ENCODE measurements at regions of chr7 and their contacts with region 1.

Region 1: GRCh38 chr7:50212666-50213621 is 91.6 kb upstream of the IKZF1 start:
- DNase-seq: peak; percentile 56 to 66 (median 59)
- H3K4me3 ChIP-seq: peak overlapping the region in 1 of 3 experiments; percentile 22
- H3K4me3 Mint-ChIP-seq: peak overlapping the region in 1 of 2 donors; percentile 70
- H3K27ac ChIP-seq: peak overlapping the region; percentile 10 to 48
- H3K27ac Mint-ChIP-seq: peak overlapping the region; percentile 21 to 75 (median 40)
- H3K4me1 ChIP-seq: peaks cover 62 to 67% of the 10 kb centered on the region in 2 donors
- H3K4me1 Mint-ChIP-seq: peaks cover 81% of the 10 kb centered on the region
- H3K27me3 ChIP-seq: no peaks in the 10 kb centered on the region
- H3K27me3 Mint-ChIP-seq: peaks cover 0 to 3% (median 2%) of the 10 kb centered on the region in 3 donors
- CTCF ChIP-seq: no peak

Region 2: DNA sequence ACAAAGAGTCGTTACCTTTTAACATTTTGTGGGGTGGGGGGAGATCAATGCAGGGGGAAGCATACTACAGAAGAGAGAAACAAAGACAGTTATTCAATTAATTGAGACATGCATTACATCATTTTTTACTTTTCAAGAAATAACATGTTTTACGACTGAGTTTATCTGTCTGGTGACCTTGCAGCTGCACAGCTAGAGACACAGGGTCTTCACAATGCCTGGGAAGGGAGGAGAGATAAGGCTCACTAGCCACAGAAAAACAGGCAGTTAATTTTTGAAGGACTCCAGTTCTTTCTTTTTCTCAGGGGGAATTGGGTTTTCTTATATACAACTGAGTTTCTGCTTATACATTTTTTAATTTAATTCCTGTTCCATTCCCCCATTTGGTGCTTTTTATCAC is 150.0 kb before region 1 on chr7:
- intact Hi-C with region 1: no loop called
- DNase-seq: no peak
- H3K4me3 ChIP-seq: no peak overlapping the region
- H3K4me3 Mint-ChIP-seq: no peak overlapping the region
- H3K27ac ChIP-seq: no peak overlapping the region
- H3K27ac Mint-ChIP-seq: no peak overlapping the region
- H3K4me1 ChIP-seq: peaks cover 0 to under 1% of the 10 kb centered on the region in 2 donors
- H3K4me1 Mint-ChIP-seq: no peaks in the 10 kb centered on the region
- H3K27me3 ChIP-seq: peaks cover 0 to 3% of the 10 kb centered on the region in 2 donors
- H3K27me3 Mint-ChIP-seq: peaks cover 0 to 4% (median 3%) of the 10 kb centered on the region in 3 donors
- CTCF ChIP-seq: no peak

Region 3: DNA sequence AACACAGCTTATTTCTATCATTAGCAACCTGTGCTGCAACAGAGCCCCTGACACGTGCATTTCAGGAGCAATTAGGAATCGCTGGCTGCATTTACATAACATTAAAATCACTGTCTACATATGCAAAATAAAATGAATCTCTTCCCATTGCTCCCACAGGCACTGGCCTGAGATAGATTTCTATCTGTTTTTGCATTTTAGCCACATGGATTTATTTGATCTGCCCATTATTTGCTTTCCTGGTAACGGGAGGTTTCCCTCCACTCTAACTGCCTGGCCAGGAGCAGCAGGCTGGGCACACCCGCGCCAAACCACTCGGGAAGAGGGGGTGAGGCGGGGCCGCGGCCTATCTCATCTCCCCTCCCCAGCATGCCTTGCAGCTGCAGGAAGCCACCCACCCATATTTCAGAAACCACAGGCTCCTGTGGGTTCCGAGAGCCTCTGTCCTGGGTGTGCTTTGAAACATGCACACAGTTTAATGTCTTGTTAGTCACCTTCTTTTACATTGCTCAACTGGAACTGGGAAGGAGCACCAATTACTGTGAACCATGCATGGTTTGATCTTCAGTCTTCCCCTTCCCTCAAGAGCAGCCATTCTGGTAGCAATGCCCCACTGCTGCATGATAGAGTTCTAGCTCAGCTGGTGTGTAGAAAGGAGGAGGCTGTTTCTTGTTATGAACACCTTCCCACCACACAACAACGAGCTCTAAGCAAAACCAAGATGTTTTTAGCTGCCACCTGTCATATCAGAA is 53.9 kb after region 1 on chr7:
- intact Hi-C with region 1: loop called (anchors 5 to 10 kb)
- DNase-seq: peak; percentile 58 to 68 (median 63)
- H3K4me3 ChIP-seq: peak overlapping the region in 2 of 3 experiments; percentile 10 to 62
- H3K4me3 Mint-ChIP-seq: peak overlapping the region; percentile 65 to 75
- H3K27ac ChIP-seq: peak overlapping the region in 1 of 2 donors; percentile 69
- H3K27ac Mint-ChIP-seq: peak overlapping the region; percentile 1 to 83 (median 57)
- H3K4me1 ChIP-seq: peaks cover 75 to 81% of the 10 kb centered on the region in 2 donors
- H3K4me1 Mint-ChIP-seq: peaks cover 88% of the 10 kb centered on the region
- H3K27me3 ChIP-seq: no peaks in the 10 kb centered on the region
- H3K27me3 Mint-ChIP-seq: peaks cover 0 to 2% (median 0%) of the 10 kb centered on the region in 3 donors
- CTCF ChIP-seq: no peak

Region 4: DNA sequence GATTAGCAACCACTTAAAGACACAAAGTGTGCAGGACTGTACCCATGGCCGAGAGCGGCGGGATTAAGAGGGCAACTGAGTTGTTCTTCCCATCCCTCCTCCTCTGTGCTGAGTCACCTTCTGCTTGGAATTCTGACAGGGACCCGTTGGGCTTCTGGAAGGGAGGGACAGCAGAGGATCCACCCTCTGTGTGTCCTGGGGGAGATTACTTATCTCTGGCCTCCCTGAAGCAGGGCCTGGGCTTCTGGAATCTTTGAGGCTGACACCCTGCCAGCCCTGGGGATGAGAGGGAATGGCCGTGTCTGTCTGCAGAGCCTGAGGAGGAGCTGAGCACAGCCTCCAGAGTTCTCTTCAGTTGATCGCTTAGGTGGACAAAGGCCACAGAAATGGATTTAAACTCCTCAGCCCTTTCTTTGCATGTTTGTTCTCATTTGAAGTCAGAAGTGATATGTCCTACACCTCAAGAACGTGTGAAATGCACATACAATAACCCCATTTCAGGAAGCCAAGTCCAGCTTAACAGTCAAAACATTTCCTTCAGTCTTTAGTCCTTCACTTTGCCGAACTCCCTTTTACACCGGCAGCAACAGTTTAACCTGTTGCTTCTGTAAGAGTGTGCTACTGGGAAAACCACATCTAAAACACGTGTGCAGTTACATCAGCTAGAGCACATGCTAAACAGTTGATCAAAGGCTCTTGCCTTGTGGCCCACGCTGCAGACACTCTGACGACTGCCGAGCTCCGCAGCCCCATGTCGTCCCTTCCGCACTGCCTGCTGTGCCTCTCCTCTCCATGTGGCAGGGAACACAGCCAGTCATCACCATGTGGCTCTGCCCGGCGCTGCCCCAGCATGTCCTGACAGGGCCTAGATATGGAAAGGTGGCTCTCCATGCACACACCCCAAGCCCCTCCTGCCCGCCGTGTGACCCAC is 147.3 kb after region 1 on chr7:
- intact Hi-C with region 1: loop called in 1 of 2 experiments (anchors 5 kb)
- DNase-seq: no peak
- H3K4me3 ChIP-seq: no peak overlapping the region
- H3K4me3 Mint-ChIP-seq: no peak overlapping the region
- H3K27ac ChIP-seq: peak overlapping the region in 1 of 2 donors; percentile 72
- H3K27ac Mint-ChIP-seq: peak overlapping the region in 6 of 7 donors; percentile 27 to 82 (median 52)
- H3K4me1 ChIP-seq: peaks cover 47 to 63% of the 10 kb centered on the region in 2 donors
- H3K4me1 Mint-ChIP-seq: peaks cover 78% of the 10 kb centered on the region
- H3K27me3 ChIP-seq: no peaks in the 10 kb centered on the region
- H3K27me3 Mint-ChIP-seq: no peaks in the 10 kb centered on the region
- CTCF ChIP-seq: no peak

Region 5: GRCh38 chr7:50418086-50418515 is 205.2 kb after region 1 on chr7:
- intact Hi-C with region 1: loop called in 1 of 2 experiments (anchors 5 kb)
- DNase-seq: peak; percentile 60 to 79 (median 78)
- H3K4me3 ChIP-seq: no peak overlapping the region
- H3K4me3 Mint-ChIP-seq: no peak overlapping the region
- H3K27ac ChIP-seq: no peak overlapping the region
- H3K27ac Mint-ChIP-seq: peak overlapping the region in 1 of 7 donors; percentile 74
- H3K4me1 ChIP-seq: peaks cover 53 to 55% of the 10 kb centered on the region in 2 donors
- H3K4me1 Mint-ChIP-seq: peaks cover 54% of the 10 kb centered on the region
- H3K27me3 ChIP-seq: no peaks in the 10 kb centered on the region
- H3K27me3 Mint-ChIP-seq: peaks cover 0 to 3% (median 2%) of the 10 kb centered on the region in 3 donors
- CTCF ChIP-seq: peak; percentile 94

Measured in CD14-positive monocyte (primary cell).